ENCODE measurements at regions of chr2 and their contacts with region 1.

Region 1: DNA sequence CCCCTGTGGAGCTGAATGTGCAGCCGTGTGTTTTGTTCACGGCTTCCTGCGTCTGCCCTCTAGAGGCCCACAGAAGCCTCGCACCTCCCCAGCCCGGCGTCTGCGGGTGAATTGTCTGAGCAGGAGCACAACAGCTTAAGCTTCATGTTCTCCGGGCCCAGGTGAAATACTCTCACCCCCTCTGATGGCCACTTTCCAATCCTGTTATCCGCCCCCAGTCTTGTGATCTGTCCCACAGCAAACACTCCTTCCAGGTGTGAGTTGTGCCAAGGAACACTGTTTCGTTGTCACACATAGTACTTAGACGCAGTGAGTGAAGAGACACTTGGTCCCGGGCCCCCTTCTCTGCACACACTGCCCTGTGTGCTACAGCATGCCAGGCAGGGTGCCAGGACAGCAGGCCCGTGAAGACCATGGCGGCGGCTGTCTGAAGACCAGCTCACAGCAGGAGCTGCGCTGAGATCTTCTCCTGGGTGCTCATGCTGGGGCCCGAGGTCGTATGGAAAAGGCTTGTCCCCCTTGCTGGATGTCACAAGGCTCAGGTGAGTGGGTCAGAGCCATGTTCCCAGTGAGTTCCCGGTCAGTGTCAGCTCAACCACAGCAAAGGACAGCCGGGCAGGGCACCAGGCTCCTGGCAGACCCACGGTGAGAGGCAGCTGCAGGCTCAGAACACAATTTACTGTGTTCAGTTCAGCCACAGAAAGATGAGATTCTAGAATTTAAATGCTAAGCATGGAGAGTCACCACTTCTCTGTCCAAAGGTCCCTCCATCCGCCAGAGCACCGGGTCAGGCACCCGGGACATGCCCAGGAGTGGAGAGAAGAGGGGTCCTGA is 6.8 kb upstream of the PXDN start:
- DNase-seq: peak; percentile 83
- ATAC-seq: peak; percentile 95
- H3K4me3 Mint-ChIP-seq: no peak overlapping the region
- H3K27ac Mint-ChIP-seq: no peak overlapping the region
- H3K4me1 Mint-ChIP-seq: peaks cover 7% of the 10 kb centered on the region
- H3K27me3 Mint-ChIP-seq: peaks cover 43% of the 10 kb centered on the region
- CTCF ChIP-seq: peak; percentile 57

Region 2: DNA sequence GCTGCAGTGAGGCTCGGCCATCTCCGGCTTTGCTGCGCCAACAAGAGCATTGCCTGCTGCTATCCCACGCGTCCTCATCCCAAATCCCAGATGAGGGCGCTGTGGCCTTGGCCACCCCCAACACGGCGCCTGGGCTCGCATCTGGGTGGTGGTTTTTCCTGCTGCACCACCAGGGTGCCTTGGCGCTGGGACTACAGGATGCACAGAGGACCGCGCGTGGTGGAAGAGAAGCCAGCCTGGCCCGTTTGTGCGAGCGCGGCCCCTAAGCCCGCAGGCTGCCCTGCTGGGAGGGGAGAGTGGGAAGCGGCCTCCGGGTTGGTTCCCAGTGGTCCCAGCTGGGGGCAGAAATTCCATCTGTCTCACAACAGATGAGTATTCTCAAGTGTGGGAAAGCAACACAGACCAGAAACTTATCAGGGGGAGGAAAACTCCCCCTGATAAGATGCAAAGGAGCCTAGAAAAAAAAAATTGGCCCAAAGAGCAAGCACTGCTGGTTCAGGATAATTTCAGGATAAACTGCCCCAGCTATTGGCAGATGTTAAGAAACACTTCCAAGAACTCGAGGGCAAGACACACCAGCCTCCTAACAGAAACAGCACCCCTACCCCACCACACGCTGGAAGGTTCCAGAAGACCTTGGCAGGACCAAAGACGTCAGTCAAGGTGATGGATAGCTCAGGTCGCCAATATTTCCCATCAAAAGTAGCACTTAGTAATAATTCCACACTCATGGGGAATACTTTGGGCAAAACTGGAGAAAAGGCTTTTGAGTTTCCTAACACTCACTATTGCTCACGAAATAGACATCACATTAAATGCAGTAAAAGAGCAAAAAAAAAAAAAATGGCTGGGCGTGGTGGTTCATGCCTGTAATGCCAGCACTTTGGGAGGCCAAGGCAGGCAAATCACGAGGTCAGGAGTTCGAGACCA is 158.9 kb before region 1 on chr2:
- CTCF ChIA-PET with region 1: interaction called, 12 read pairs
- POLR2A ChIA-PET with region 1: no interaction called
- DNase-seq: peak; percentile 80
- ATAC-seq: peak; percentile 81
- H3K4me3 Mint-ChIP-seq: no peak overlapping the region
- H3K27ac Mint-ChIP-seq: no peak overlapping the region; the same call in 1 of the 2 replicates
- H3K4me1 Mint-ChIP-seq: peaks cover 30% of the 10 kb centered on the region
- H3K27me3 Mint-ChIP-seq: no peaks in the 10 kb centered on the region
- CTCF ChIP-seq: peak; percentile 32; the same call in 1 of the 2 replicates

Region 3: DNA sequence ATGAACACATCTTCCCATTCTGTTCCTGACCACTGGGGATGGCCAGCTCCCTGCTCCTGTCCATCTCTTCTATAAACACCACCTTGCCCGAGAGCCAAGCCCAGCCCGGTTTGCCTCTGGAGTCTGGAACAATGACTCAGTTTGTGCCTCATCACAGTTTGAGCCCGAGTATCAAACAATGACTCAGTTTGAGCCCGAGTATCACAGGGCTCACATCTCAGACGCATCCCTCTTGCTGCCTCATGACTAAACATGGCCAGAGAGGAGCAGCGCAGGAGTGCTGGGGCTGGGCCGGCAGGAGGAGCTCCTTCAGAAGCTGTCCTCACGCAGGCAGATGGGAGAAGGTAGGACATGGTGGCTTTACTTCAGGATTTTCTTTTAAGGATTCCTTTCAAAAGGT is 75.5 kb before region 1 on chr2:
- CTCF ChIA-PET with region 1: interaction called, 17 read pairs
- POLR2A ChIA-PET with region 1: no interaction called
- DNase-seq: no peak
- ATAC-seq: no peak
- H3K4me3 Mint-ChIP-seq: no peak overlapping the region
- H3K27ac Mint-ChIP-seq: peak overlapping the region; percentile 56
- H3K4me1 Mint-ChIP-seq: no peaks in the 10 kb centered on the region
- H3K27me3 Mint-ChIP-seq: no peaks in the 10 kb centered on the region
- CTCF ChIP-seq: no peak

Region 4: GRCh38 chr2:1707771-1708418 is 43.3 kb before region 1 on chr2:
- CTCF ChIA-PET with region 1: interaction called, 11 read pairs
- POLR2A ChIA-PET with region 1: no interaction called
- DNase-seq: peak; percentile 66
- ATAC-seq: peak; percentile 71
- H3K4me3 Mint-ChIP-seq: peak overlapping the region; percentile 35; the same call in 1 of the 2 replicates
- H3K27ac Mint-ChIP-seq: peak overlapping the region; percentile 84
- H3K4me1 Mint-ChIP-seq: peaks cover 36% of the 10 kb centered on the region
- H3K27me3 Mint-ChIP-seq: no peaks in the 10 kb centered on the region
- CTCF ChIP-seq: no peak

Region 5: DNA sequence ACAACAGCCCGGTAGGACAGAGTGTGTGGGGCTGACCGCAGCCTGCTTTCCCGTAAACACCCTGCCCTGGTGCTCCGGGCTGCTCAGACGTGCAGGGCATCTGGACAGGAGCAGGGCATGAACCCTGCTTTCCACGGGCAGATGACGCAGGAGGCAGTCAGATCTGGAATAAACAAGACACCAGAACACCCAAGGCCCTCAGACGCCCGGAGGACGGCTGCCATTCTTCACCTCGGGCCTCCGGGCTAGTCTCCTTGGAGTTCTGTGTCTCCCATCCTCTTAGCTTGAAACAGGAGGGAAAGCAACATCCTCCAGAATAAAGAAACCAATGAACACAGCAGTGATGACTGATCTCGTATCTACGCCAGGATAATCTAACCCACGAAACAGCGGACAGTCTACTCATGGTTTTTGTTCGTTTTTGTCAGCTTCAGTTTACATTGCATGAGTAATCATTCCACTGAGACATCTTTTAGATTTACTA is 14.1 kb before region 1 on chr2:
- CTCF ChIA-PET with region 1: interaction called, 21 read pairs
- POLR2A ChIA-PET with region 1: no interaction called
- DNase-seq: no peak
- ATAC-seq: no peak
- H3K4me3 Mint-ChIP-seq: no peak overlapping the region
- H3K27ac Mint-ChIP-seq: no peak overlapping the region
- H3K4me1 Mint-ChIP-seq: peaks cover 29% of the 10 kb centered on the region
- H3K27me3 Mint-ChIP-seq: no peaks in the 10 kb centered on the region; the same call in 1 of the 2 replicates
- CTCF ChIP-seq: no peak

Region 6: GRCh38 chr2:1887915-1888314 is 136.8 kb after region 1 on chr2:
- CTCF ChIA-PET with region 1: no interaction called
- POLR2A ChIA-PET with region 1: no interaction called
- DNase-seq: no peak
- ATAC-seq: peak; percentile 71
- H3K4me3 Mint-ChIP-seq: no peak overlapping the region
- H3K27ac Mint-ChIP-seq: no peak overlapping the region
- H3K4me1 Mint-ChIP-seq: peaks cover 3% of the 10 kb centered on the region; the same call in 1 of the 2 replicates
- H3K27me3 Mint-ChIP-seq: no peaks in the 10 kb centered on the region
- CTCF ChIP-seq: no peak

Measured in WTC11 (cell line).